CD4-positive, alpha-beta T cell (primary cell): ENCODE measurements at regions of chr7 and their contacts with region 1.

Region 1: DNA sequence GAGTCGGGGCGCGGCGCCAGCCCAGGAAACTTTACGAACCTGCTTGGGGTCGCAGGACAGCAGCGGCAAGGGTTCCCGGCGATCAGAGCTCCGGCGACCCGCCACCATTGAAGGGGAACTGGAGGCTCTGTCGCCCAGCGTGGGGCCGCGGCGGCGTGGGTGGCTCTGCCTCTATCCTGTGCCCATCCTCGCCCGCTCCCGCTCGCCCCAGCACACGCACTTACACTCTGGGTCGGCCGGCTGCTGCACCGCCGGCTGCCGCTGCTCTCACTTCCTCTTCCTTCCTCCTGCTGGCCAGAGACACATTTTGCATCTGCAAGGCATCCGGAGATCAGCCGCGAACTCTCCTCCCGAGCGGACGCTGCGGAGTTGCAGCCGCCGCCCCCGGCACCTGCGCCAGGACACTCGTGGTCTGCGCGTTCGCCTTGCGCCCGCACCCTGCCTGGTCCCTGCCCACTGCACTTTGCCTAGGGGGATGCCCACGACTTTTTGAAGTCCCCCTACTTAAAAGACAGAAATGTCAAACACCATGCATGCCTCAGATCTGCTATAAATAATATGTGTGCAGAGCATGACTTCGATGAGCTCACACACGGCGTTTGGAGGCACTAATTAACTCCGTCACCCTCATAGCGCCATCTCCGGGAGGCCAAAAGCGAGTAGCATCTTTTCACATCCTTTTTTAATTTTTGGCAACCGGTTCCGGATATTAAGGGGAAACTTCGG is at the start of gene ELMO1:
- DNase-seq: peak; percentile 62 to 93 (median 74)
- ATAC-seq: peak; percentile 74
- H3K4me3 ChIP-seq: peak within 1 kb of the TSS; percentile 96
- H3K4me3 Mint-ChIP-seq: peak within 1 kb of the TSS; percentile 96
- H3K27ac ChIP-seq: peak within 1 kb of the TSS; percentile 86 to 97
- H3K27ac Mint-ChIP-seq: peak within 1 kb of the TSS; percentile 97
- H3K4me1 ChIP-seq: peaks cover 26% of the 10 kb centered on the region
- H3K4me1 Mint-ChIP-seq: peaks cover 60% of the 10 kb centered on the region
- H3K27me3 ChIP-seq: no peaks in the 10 kb centered on the region
- H3K27me3 Mint-ChIP-seq: peaks cover 11% of the 10 kb centered on the region
- CTCF ChIP-seq: peak; percentile 65
- total RNA-seq, gene ELMO1: 117 to 120 TPM

Region 2: DNA sequence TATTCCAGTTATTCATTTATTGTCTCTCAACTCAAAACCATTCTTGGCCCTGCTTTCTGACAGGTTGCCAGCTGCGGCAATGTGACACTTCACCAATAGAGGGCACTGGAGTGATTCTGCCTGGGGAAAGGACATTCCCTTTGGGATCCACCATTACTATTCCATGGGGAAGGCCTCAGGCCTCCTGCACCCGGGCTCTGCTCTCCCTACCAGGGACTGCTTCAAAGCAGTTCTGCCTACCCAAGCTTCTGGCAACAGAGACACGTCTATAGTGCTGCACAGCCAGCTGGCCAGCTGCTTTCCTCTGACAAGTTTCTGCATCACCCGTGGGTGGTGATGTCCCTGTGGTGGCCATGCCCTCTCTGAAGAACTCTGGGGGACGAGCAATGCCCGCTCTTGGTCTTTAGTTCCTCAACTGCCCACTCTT is 164.0 kb before region 1 on chr7:
- CTCF ChIA-PET with region 1: interaction called, 14 read pairs
- POLR2A ChIA-PET with region 1: interaction called, 4 read pairs
- intact Hi-C with region 1: loop called (anchors 2 to 5 kb)
- DNase-seq: peak in 13 of 14 experiments; percentile 6 to 62 (median 31)
- ATAC-seq: peak; percentile 53
- H3K4me3 ChIP-seq: no peak overlapping the region
- H3K4me3 Mint-ChIP-seq: no peak overlapping the region
- H3K27ac ChIP-seq: no peak overlapping the region
- H3K27ac Mint-ChIP-seq: peak overlapping the region; percentile 75
- H3K4me1 ChIP-seq: peaks cover 19% of the 10 kb centered on the region
- H3K4me1 Mint-ChIP-seq: peaks cover 66% of the 10 kb centered on the region
- H3K27me3 ChIP-seq: no peaks in the 10 kb centered on the region
- H3K27me3 Mint-ChIP-seq: no peaks in the 10 kb centered on the region
- CTCF ChIP-seq: peak; percentile 88

Region 3: GRCh38 chr7:37342688-37343471 is 105.9 kb before region 1 on chr7:
- CTCF ChIA-PET with region 1: interaction called, 6 read pairs
- POLR2A ChIA-PET with region 1: interaction called, 17 read pairs
- intact Hi-C with region 1: loop called in 1 of 2 experiments (anchors 2 kb)
- DNase-seq: peak; percentile 52 to 91 (median 70)
- ATAC-seq: peak; percentile 88
- H3K4me3 ChIP-seq: peak overlapping the region; percentile 62
- H3K4me3 Mint-ChIP-seq: peak overlapping the region; percentile 90
- H3K27ac ChIP-seq: peak overlapping the region; percentile 67 to 82
- H3K27ac Mint-ChIP-seq: peak overlapping the region; percentile 95
- H3K4me1 ChIP-seq: peaks cover 40% of the 10 kb centered on the region
- H3K4me1 Mint-ChIP-seq: peaks cover 72% of the 10 kb centered on the region
- H3K27me3 ChIP-seq: no peaks in the 10 kb centered on the region
- H3K27me3 Mint-ChIP-seq: no peaks in the 10 kb centered on the region
- CTCF ChIP-seq: peak; percentile 23

Region 4: DNA sequence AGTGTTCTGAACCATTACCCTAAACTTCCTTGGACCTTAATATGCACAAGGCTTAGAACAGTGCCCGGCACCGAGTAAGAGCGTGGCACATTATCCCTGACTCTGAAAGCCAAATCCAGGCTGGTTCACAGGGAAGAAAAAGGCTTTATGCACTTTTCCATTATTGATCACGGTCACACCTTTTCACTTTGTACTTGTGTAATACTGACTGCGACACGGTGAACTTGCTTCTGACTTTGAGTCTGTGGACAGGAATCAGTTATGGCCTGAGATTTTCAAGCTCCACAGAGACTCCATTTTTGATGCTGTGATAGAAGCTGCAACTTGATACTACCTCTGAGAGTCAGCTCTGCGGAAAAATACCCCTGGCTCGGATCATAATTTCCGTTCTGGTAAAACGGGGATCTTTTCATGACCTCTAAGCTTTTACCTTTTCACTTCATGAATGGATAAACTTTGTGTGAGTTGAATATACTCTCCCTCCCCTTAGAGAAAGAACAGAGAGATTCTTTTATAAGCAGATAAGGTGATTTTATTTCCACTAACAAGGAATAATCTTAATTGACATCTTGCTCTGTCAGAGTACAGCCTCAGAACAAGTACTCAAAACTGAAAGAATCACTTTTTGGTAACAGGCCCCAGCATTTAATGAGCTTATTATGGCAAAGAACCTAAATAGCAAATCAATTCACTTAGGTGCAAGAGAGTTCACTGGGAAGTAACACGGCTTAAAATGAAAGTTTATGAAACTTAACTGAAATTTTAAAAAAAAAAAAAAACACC is 88.9 kb before region 1 on chr7:
- CTCF ChIA-PET with region 1: interaction called, 7 read pairs
- POLR2A ChIA-PET with region 1: interaction called, 134 read pairs
- intact Hi-C with region 1: loop called in 1 of 2 experiments (anchors 2 kb)
- DNase-seq: peak in 1 of 14 experiments; percentile 29
- ATAC-seq: no peak
- H3K4me3 ChIP-seq: peak overlapping the region; percentile 8
- H3K4me3 Mint-ChIP-seq: peak overlapping the region; percentile 45
- H3K27ac ChIP-seq: no peak overlapping the region
- H3K27ac Mint-ChIP-seq: peak overlapping the region; percentile 56
- H3K4me1 ChIP-seq: peaks cover 43% of the 10 kb centered on the region
- H3K4me1 Mint-ChIP-seq: peaks cover 86% of the 10 kb centered on the region
- H3K27me3 ChIP-seq: no peaks in the 10 kb centered on the region
- H3K27me3 Mint-ChIP-seq: no peaks in the 10 kb centered on the region
- CTCF ChIP-seq: no peak

Region 5: DNA sequence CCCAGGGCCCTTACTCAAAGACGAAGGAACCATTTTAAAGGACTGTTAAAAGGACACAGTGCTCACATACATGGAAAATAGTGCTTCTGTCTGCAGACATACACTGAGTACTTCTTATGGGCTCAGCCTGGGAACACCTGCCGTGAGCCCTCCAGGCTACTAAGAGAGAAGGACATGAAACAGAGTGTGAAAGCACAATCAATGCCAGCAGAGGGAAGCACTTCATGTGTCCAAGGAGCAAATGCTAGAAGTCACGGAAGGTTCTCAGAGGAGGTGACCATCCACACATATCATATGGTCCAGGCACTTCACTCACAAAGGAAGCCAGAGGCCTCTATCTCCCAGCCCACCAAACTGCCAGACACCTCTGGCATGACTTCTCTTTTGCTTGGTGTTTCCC is 15.6 kb before region 1 on chr7:
- CTCF ChIA-PET with region 1: no interaction called
- POLR2A ChIA-PET with region 1: interaction called, 44 read pairs
- intact Hi-C with region 1: loop called in 1 of 2 experiments (anchors 2 kb)
- DNase-seq: peak in 1 of 14 experiments; percentile 22
- ATAC-seq: no peak
- H3K4me3 ChIP-seq: no peak overlapping the region
- H3K4me3 Mint-ChIP-seq: peak overlapping the region; percentile 74
- H3K27ac ChIP-seq: no peak overlapping the region
- H3K27ac Mint-ChIP-seq: peak overlapping the region; percentile 83
- H3K4me1 ChIP-seq: peaks cover 33% of the 10 kb centered on the region
- H3K4me1 Mint-ChIP-seq: peaks cover 84% of the 10 kb centered on the region
- H3K27me3 ChIP-seq: no peaks in the 10 kb centered on the region
- H3K27me3 Mint-ChIP-seq: no peaks in the 10 kb centered on the region
- CTCF ChIP-seq: no peak

Region 6: DNA sequence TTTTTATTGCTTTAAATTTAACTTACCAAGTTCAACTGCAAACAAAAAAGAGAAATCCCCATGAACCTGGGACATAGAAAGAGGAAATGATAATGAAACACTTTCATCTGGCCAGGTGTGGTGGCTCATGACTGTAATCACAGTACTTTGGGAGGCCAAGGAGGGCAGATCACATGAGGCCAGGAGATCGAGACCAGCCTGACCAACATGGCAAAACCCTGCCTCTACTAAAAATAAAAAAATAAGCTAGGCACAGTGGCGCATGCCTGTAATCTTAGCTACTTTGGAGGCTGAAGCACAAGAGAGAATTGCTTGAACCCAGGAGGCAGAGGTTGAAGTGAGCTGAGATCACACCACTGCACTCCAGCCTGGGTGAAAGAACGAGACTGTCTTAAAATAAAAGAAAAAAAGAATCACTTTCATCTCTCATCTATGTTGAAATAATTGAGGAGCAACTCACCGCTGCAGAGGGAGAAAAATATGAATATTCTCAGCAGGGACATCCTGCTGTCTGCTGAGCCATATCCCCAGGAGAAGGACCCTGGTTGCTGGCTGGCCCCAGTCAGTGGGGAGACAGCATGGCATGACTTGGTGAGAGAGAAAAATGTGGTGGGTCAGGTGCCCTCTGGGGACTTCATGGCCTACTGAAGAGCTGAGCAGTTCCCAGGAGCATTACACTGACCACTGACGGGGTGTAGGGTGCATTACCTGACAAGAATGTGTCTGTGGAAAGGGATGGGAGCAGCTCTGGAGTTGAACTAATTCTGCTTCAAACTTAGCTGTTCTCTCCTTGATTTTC is 847.5 kb after region 1 on chr7:
- CTCF ChIA-PET with region 1: no interaction called
- POLR2A ChIA-PET with region 1: no interaction called
- intact Hi-C with region 1: no loop called
- DNase-seq: no peak
- ATAC-seq: no peak
- H3K4me3 ChIP-seq: no peak overlapping the region
- H3K4me3 Mint-ChIP-seq: no peak overlapping the region
- H3K27ac ChIP-seq: no peak overlapping the region
- H3K27ac Mint-ChIP-seq: no peak overlapping the region
- H3K4me1 ChIP-seq: no peaks in the 10 kb centered on the region
- H3K4me1 Mint-ChIP-seq: no peaks in the 10 kb centered on the region
- H3K27me3 ChIP-seq: no peaks in the 10 kb centered on the region
- H3K27me3 Mint-ChIP-seq: no peaks in the 10 kb centered on the region
- CTCF ChIP-seq: no peak